GM13976 (cell line): ENCODE measurements at regions of chr9 and their contacts with region 1.

Region 1: GRCh38 chr9:9170439-9171134 is 1371.0 kb upstream of the DMAC1 start:
- DNase-seq: no peak
- CTCF ChIP-seq: no peak

Region 2: GRCh38 chr9:9117866-9118265 is 52.7 kb before region 1 on chr9:
- in situ Hi-C with region 1: loop called (anchors 10 kb)
- DNase-seq: no peak
- CTCF ChIP-seq: no peak